B cell (primary cell): ENCODE measurements at regions of chr20 and their contacts with region 1.

Region 1: DNA sequence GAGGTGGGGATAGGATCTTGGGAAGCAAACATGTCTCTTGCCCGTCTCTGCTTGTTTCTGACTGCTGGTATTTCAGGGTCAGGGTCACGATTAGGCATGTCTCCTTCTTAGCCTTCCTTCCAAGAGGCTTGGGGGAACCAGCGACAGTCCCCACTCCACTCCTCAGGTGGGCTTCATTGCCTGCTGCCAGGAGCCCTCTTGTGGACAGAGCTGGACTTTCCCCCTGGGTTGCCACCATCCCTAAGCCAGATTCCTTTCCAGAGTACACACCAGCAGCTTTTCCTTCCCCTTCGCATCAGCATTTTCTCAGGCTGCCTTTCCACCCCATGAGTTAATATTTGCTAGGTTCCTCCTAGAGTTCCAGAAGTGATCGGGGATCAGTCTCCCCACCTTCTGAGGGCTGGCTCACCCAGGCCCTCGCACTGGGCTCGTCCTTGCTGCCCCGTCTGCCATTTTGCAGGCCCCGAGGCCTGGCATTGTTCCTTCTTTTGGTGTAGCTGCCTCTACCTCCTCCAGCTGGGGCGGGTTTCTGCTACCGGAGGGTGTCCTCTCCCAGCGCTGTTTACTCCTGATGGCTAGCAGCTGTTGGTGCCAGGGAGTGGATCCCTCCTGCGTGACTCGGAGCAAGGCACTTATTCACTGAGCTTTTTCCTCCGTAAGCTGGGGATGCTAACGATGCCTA is 8.8 kb upstream of the C20orf144 start:
- DNase-seq: peak; percentile 72
- ATAC-seq: peak; percentile 79
- H3K4me3 ChIP-seq: no peak overlapping the region
- H3K4me3 Mint-ChIP-seq: no peak overlapping the region
- H3K27ac ChIP-seq: no peak overlapping the region
- H3K27ac Mint-ChIP-seq: no peak overlapping the region
- H3K4me1 ChIP-seq: peaks cover 0 to 9% of the 10 kb centered on the region in 2 donors
- H3K4me1 Mint-ChIP-seq: peaks cover 5% of the 10 kb centered on the region
- H3K27me3 ChIP-seq: no peaks in the 10 kb centered on the region
- H3K27me3 Mint-ChIP-seq: no peaks in the 10 kb centered on the region
- CTCF ChIP-seq: peak; percentile 69

Region 2: GRCh38 chr20:33391722-33392415 is 261.5 kb before region 1 on chr20:
- CTCF ChIA-PET with region 1: interaction called, 7 read pairs
- POLR2A ChIA-PET with region 1: no interaction called
- intact Hi-C with region 1: loop called (anchors 5 kb)
- DNase-seq: no peak
- ATAC-seq: no peak
- H3K4me3 ChIP-seq: no peak overlapping the region
- H3K4me3 Mint-ChIP-seq: no peak overlapping the region
- H3K27ac ChIP-seq: no peak overlapping the region
- H3K27ac Mint-ChIP-seq: no peak overlapping the region
- H3K4me1 ChIP-seq: no peaks in the 10 kb centered on the region
- H3K4me1 Mint-ChIP-seq: peaks cover 18% of the 10 kb centered on the region
- H3K27me3 ChIP-seq: no peaks in the 10 kb centered on the region
- H3K27me3 Mint-ChIP-seq: no peaks in the 10 kb centered on the region
- CTCF ChIP-seq: no peak

Region 3: DNA sequence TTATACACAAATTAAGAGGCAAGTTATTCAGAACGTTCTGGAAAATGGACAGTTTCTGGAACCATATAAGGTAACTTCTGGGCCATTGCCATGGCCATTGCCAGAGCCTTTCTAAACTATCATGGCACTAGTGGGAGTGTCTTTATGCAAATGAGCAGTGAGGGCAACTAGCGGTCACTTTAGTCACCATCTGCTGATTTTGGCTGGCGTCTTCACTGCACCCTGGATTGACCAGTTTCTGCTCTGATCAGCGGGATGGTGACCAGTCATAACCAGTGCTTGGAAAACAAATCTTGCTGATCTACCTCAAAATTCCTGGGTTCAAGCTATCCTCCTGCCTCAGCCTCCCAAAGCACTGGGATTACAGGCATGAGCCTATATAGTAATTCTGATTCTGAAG is 202.5 kb before region 1 on chr20:
- CTCF ChIA-PET with region 1: interaction called, 31 read pairs
- POLR2A ChIA-PET with region 1: no interaction called
- intact Hi-C with region 1: loop called (anchors 2 kb)
- DNase-seq: no peak
- ATAC-seq: no peak
- H3K4me3 ChIP-seq: no peak overlapping the region
- H3K4me3 Mint-ChIP-seq: no peak overlapping the region
- H3K27ac ChIP-seq: no peak overlapping the region
- H3K27ac Mint-ChIP-seq: no peak overlapping the region
- H3K4me1 ChIP-seq: no peaks in the 10 kb centered on the region
- H3K4me1 Mint-ChIP-seq: peaks cover under 1% of the 10 kb centered on the region
- H3K27me3 ChIP-seq: no peaks in the 10 kb centered on the region
- H3K27me3 Mint-ChIP-seq: no peaks in the 10 kb centered on the region
- CTCF ChIP-seq: no peak

Region 4: DNA sequence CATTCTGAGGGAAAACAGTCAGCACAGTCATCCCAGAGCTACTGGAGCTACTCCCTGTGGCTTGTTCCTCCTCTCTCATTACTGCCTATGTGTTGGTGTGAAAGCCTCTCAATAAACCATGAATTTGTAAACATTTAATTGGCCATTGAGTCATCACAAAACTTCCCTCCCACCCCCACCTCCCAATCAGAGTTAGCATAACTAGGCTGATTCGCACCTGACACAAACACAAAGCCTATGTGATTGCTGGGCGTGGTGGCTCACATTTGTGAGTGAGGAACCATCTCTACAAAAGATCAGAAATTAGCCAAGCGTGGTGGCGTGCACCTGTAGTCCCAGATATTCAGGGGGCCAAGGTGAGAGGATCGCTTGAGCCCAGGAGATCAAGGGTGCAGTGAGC is 192.6 kb before region 1 on chr20:
- CTCF ChIA-PET with region 1: interaction called, 31 read pairs
- POLR2A ChIA-PET with region 1: no interaction called
- intact Hi-C with region 1: loop called (anchors 2 kb)
- DNase-seq: no peak
- ATAC-seq: no peak
- H3K4me3 ChIP-seq: no peak overlapping the region
- H3K4me3 Mint-ChIP-seq: no peak overlapping the region
- H3K27ac ChIP-seq: no peak overlapping the region
- H3K27ac Mint-ChIP-seq: peak overlapping the region; percentile 13
- H3K4me1 ChIP-seq: peaks cover 10 to 14% of the 10 kb centered on the region in 2 donors
- H3K4me1 Mint-ChIP-seq: peaks cover 14% of the 10 kb centered on the region
- H3K27me3 ChIP-seq: no peaks in the 10 kb centered on the region
- H3K27me3 Mint-ChIP-seq: no peaks in the 10 kb centered on the region
- CTCF ChIP-seq: no peak